CD4-positive, alpha-beta memory T cell (primary cell): ENCODE measurements at regions of chr10 and their contacts with region 1.

Region 1: GRCh38 chr10:79374312-79375191 is 27.3 kb downstream of the PPIF start:
- DNase-seq: peak; percentile 54 to 74 (median 63)
- H3K4me3 ChIP-seq: no peak overlapping the region
- H3K4me3 Mint-ChIP-seq: no peak overlapping the region
- H3K27ac ChIP-seq: no peak overlapping the region
- H3K27ac Mint-ChIP-seq: peak overlapping the region in 1 of 7 donors; percentile 65
- H3K4me1 ChIP-seq: no peaks in the 10 kb centered on the region
- H3K4me1 Mint-ChIP-seq: peaks cover 0 to 7% (median 3%) of the 10 kb centered on the region in 4 donors
- H3K27me3 ChIP-seq: no peaks in the 10 kb centered on the region
- H3K27me3 Mint-ChIP-seq: no peaks in the 10 kb centered on the region

Region 2: DNA sequence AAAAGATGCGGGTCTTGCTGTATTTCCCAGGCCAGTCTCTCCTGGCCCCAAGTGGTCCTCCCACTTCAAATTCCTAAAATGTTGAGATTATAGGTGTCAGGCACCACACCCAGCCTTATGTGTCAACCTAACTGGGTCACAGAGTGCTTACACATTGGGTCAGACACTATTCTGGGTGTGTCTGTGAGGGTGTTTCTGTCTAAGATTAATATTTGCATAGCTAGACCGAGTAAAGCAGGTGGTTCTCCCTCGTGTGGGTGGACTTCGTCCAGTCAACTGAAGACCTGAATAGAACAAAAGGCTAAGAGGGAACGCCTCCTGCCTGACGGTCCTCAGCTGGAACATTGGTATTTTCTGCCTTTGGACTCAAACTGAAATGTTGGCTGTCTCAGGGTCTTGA is 15.8 kb before region 1 on chr10:
- CTCF ChIA-PET with region 1: interaction called, 31 read pairs
- POLR2A ChIA-PET with region 1: no interaction called
- intact Hi-C with region 1: no loop called
- DNase-seq: no peak
- H3K4me3 ChIP-seq: no peak overlapping the region
- H3K4me3 Mint-ChIP-seq: no peak overlapping the region
- H3K27ac ChIP-seq: no peak overlapping the region
- H3K27ac Mint-ChIP-seq: no peak overlapping the region
- H3K4me1 ChIP-seq: peaks cover 9% of the 10 kb centered on the region
- H3K4me1 Mint-ChIP-seq: peaks cover 15 to 45% (median 22%) of the 10 kb centered on the region in 4 donors
- H3K27me3 ChIP-seq: no peaks in the 10 kb centered on the region
- H3K27me3 Mint-ChIP-seq: peaks cover 0 to 3% of the 10 kb centered on the region in 2 donors

Region 3: DNA sequence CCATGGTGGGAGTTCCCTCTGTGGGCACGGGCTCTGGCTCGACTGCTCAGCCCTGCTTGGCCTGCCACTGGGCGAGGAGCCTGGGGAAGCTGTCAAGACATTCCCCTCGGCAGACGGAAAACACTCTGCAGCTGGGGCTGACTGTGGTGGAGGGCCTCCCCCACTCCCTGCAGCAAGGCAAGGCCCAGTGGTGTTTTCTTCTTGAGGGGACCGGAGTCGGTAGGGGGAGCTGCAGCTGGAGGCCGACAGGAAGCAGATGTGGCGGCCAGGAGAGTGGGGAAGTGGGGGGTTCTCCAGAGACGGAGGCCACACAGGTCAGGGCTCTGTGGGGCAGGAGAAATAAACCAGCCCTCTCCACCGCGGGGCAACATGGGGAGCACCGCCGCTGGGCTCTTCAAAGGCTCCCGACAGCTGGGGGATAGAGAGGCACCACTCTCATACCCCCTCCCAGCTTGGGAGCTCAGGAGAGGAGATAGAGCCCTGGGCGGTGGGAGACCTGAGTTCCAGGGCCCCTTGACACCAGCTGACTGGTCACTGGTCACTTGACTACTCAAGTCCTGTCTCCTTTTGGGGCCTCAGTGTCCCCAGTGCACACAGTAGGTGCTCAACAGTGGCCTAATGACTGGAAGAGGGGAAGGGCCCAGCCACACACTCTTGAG is 16.1 kb after region 1 on chr10:
- CTCF ChIA-PET with region 1: interaction called, 33 read pairs
- POLR2A ChIA-PET with region 1: no interaction called
- intact Hi-C with region 1: no loop called
- DNase-seq: no peak
- H3K4me3 ChIP-seq: no peak overlapping the region
- H3K4me3 Mint-ChIP-seq: no peak overlapping the region
- H3K27ac ChIP-seq: no peak overlapping the region
- H3K27ac Mint-ChIP-seq: no peak overlapping the region
- H3K4me1 ChIP-seq: no peaks in the 10 kb centered on the region
- H3K4me1 Mint-ChIP-seq: peaks cover 0 to 4% (median 0%) of the 10 kb centered on the region in 4 donors
- H3K27me3 ChIP-seq: no peaks in the 10 kb centered on the region
- H3K27me3 Mint-ChIP-seq: no peaks in the 10 kb centered on the region

Region 4: DNA sequence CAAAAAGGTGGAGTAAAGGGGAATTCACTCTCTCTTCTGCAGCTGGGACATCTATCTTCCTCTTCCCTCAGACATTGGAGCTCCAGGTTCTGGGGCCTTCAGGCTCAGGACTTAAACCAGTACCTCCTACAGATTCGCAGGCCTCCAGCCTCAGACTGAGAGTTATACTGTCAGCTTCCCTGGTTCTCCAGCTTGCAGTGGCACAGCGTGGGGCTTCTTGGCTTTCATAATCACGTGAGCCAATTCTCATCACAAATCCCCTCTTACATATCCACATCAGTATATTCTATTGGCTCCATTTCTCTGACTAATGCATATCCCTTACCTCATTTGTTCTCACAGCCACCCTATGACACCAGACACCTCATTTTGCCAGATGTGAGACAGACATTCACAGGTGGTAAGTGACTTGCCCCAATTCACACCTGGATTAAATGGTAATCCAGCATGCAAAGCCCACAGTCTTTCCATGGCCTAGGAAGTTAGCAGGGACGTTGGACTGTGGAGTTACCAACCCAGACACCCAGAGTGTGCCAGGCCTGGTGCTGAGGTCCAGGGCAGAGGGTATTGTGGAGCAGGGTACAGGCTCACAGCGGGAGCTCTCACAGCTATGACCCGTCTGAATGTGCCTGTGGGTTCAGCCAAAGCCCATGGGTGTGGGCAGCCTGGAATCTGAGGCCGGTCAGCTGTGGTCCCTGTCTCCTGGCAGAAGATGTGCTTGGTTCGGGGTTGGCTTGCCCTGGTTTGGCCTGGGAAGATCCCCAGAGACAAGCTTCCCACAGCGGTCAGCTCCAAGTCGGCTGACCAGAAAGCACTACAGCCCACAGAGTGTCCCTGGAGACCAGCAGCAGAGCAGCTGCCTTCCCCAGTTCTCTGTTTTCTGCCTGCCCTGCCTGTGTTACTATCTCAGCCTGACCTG is 89.3 kb after region 1 on chr10:
- CTCF ChIA-PET with region 1: interaction called, 91 read pairs
- POLR2A ChIA-PET with region 1: interaction called, 4 read pairs
- intact Hi-C with region 1: loop called (anchors 1 kb)
- DNase-seq: no peak
- H3K4me3 ChIP-seq: no peak overlapping the region
- H3K4me3 Mint-ChIP-seq: no peak overlapping the region
- H3K27ac ChIP-seq: no peak overlapping the region
- H3K27ac Mint-ChIP-seq: no peak overlapping the region
- H3K4me1 ChIP-seq: no peaks in the 10 kb centered on the region
- H3K4me1 Mint-ChIP-seq: peaks cover 0 to 1% (median 0%) of the 10 kb centered on the region in 4 donors
- H3K27me3 ChIP-seq: no peaks in the 10 kb centered on the region
- H3K27me3 Mint-ChIP-seq: peaks cover 0 to 3% of the 10 kb centered on the region in 2 donors

Region 5: GRCh38 chr10:79472951-79473350 is 98.4 kb after region 1 on chr10:
- CTCF ChIA-PET with region 1: interaction called, 91 read pairs
- POLR2A ChIA-PET with region 1: interaction called, 4 read pairs
- intact Hi-C with region 1: no loop called
- DNase-seq: no peak
- H3K4me3 ChIP-seq: no peak overlapping the region
- H3K4me3 Mint-ChIP-seq: no peak overlapping the region
- H3K27ac ChIP-seq: no peak overlapping the region
- H3K27ac Mint-ChIP-seq: no peak overlapping the region
- H3K4me1 ChIP-seq: no peaks in the 10 kb centered on the region
- H3K4me1 Mint-ChIP-seq: no peaks in the 10 kb centered on the region
- H3K27me3 ChIP-seq: no peaks in the 10 kb centered on the region
- H3K27me3 Mint-ChIP-seq: peaks cover 11 to 12% of the 10 kb centered on the region in 2 donors

Region 6: GRCh38 chr10:79487296-79488194 is 113.0 kb after region 1 on chr10:
- CTCF ChIA-PET with region 1: interaction called, 45 read pairs
- POLR2A ChIA-PET with region 1: no interaction called
- intact Hi-C with region 1: loop called (anchors 1 kb)
- DNase-seq: peak in 4 of 5 donors; percentile 2 to 7 (median 6)
- H3K4me3 ChIP-seq: no peak overlapping the region
- H3K4me3 Mint-ChIP-seq: no peak overlapping the region
- H3K27ac ChIP-seq: no peak overlapping the region
- H3K27ac Mint-ChIP-seq: no peak overlapping the region
- H3K4me1 ChIP-seq: no peaks in the 10 kb centered on the region
- H3K4me1 Mint-ChIP-seq: no peaks in the 10 kb centered on the region
- H3K27me3 ChIP-seq: no peaks in the 10 kb centered on the region
- H3K27me3 Mint-ChIP-seq: no peaks in the 10 kb centered on the region

Region 7: DNA sequence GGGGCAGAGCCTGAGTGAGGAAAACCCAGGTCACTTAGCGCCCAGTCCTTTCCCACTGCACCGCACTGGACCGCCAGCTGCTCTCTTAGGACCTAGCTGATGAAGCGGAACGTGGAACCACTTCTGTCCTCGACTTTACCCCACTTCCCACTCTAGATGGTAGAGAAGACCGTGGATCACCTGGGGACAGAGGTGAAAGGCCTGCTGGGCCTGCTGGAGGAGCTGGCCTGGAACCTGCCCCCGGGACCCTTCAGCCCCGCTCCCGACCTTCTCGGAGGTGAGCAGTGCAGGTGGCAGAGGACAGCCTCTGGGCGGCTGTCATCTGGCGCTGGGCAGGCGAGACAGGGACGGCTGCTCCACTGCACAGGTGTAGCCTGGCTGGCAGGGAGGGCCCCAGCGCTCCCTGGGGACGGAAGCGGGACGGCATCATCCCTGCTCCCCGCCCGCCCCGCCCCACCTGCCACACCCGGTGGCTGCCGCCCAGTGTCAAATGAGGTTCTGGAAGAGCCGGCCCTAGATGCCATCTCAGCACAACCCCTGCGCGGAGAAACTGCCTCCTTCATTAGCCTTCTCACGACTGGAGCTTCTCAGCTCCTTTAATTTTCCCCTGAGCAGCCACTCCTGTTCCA is 769.6 kb after region 1 on chr10:
- CTCF ChIA-PET with region 1: no interaction called
- POLR2A ChIA-PET with region 1: no interaction called
- intact Hi-C with region 1: loop called (anchors 5 kb)
- DNase-seq: peak in 2 of 5 donors; percentile 22 to 48
- H3K4me3 ChIP-seq: peak overlapping the region; percentile 30 to 57
- H3K4me3 Mint-ChIP-seq: peak overlapping the region; percentile 81 to 90 (median 84)
- H3K27ac ChIP-seq: peak overlapping the region; percentile 40
- H3K27ac Mint-ChIP-seq: peak overlapping the region; percentile 59 to 97 (median 84)
- H3K4me1 ChIP-seq: peaks cover 17% of the 10 kb centered on the region
- H3K4me1 Mint-ChIP-seq: peaks cover 15 to 24% (median 19%) of the 10 kb centered on the region in 4 donors
- H3K27me3 ChIP-seq: no peaks in the 10 kb centered on the region
- H3K27me3 Mint-ChIP-seq: peaks cover 6 to 9% of the 10 kb centered on the region in 2 donors